Activated naive CD4-positive, alpha-beta T cell treated with anti-CD3 and anti-CD28 coated beads for 36 hours (primary cell): ENCODE measurements at regions of chr14 and their contacts with region 1.

Region 1: DNA sequence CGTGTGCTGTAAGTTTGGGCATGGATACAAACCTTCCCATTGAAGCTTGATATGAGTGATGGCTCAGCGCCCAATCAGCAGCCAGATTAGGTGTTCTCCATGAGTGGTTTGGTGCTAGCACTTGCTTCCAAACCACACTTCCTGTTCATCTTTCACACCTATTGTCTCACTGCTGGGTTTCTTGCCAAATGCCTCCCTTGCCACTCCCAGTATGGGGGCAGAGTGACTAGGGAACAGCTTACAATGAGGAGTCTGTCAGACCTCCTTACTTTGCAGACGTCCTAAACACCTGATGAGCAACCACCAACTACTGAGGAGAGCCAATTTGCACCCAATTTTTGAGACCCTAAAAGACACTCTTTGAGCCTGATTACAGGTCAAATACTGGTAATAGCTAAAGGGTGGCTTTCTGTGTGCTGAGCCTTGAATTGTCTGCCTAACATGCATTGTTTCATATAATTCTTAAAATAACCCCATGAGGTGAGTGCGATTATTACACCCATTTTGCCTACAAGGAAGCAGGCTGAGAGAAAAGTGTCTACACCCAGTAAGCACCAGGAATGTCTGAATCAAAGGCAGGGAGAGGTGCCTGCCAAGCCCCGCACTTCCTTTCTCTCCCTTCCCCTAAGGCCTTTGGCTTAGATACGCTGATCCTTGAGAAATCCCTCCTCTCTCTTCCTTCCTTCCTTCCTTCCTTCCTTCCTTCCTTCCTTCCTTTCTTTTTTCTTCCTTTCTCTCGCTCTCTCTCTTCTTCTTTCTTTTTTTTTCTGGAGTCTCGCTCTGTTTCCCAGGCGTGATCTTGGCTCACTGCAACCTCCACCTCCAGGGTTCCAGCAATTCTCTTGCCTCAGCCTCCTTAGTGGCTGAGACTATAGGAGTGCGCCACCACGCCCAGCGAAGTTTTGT is 48.2 kb upstream of the FOS start:
- DNase-seq: peak; percentile 81
- H3K4me3 Mint-ChIP-seq: no peak overlapping the region
- H3K27ac Mint-ChIP-seq: no peak overlapping the region
- H3K4me1 Mint-ChIP-seq: peaks cover 46% of the 10 kb centered on the region
- H3K27me3 Mint-ChIP-seq: no peaks in the 10 kb centered on the region

Region 2: GRCh38 chr14:75258615-75259466 is 28.4 kb after region 1 on chr14:
- CTCF ChIA-PET with region 1: no interaction called
- intact Hi-C with region 1: loop called (anchors 1 kb)
- DNase-seq: peak; percentile 99
- H3K4me3 Mint-ChIP-seq: peak overlapping the region; percentile 77
- H3K27ac Mint-ChIP-seq: peak overlapping the region; percentile 77
- H3K4me1 Mint-ChIP-seq: peaks cover 18% of the 10 kb centered on the region
- H3K27me3 Mint-ChIP-seq: no peaks in the 10 kb centered on the region